Panc1 (cell line): ENCODE measurements at regions of chr16 and their contacts with region 1.

Region 1: DNA sequence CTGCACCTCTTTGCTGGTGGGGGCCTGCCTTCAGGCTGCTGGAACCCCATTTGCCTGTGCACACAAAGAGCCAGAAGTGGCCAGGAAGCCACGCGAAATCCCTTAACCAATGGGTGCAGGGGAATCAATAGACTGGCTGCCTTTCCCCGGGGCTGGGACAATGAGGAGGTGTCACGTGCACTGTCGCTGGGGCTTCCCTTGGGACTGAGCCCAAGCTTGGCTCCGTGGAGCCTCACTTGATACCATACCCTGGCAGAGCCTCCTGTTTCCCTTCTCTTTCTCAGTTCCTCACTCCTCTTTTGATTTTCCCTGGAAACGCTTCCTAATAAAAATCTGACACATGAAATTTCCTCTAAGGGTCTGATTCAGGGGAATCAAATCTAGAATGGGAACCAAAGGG is 38.8 kb upstream of the C16orf82 start:
- DNase-seq: no peak
- ATAC-seq: no peak
- H3K4me3 ChIP-seq: no peak overlapping the region
- H3K27ac ChIP-seq: no peak overlapping the region
- H3K4me1 ChIP-seq: no peaks in the 10 kb centered on the region
- H3K27me3 ChIP-seq: peaks cover 4% of the 10 kb centered on the region; the same call in 1 of the 2 replicates
- CTCF ChIP-seq: no peak

Region 2: GRCh38 chr16:27046958-27047518 is 19.1 kb after region 1 on chr16:
- CTCF ChIA-PET with region 1: no interaction called
- POLR2A ChIA-PET with region 1: no interaction called
- in situ Hi-C with region 1: no loop called
- intact Hi-C with region 1: loop called (anchors 1 kb)
- DNase-seq: no peak
- ATAC-seq: no peak
- H3K4me3 ChIP-seq: no peak overlapping the region
- H3K27ac ChIP-seq: no peak overlapping the region
- H3K4me1 ChIP-seq: no peaks in the 10 kb centered on the region
- H3K27me3 ChIP-seq: peaks cover 6% of the 10 kb centered on the region
- CTCF ChIP-seq: no peak

Region 3: GRCh38 chr16:27080870-27081269 is 52.9 kb after region 1 on chr16:
- CTCF ChIA-PET with region 1: interaction called, 14 read pairs
- POLR2A ChIA-PET with region 1: no interaction called
- in situ Hi-C with region 1: no loop called
- intact Hi-C with region 1: no loop called
- DNase-seq: no peak
- ATAC-seq: peak; percentile 73
- H3K4me3 ChIP-seq: no peak overlapping the region
- H3K27ac ChIP-seq: no peak overlapping the region
- H3K4me1 ChIP-seq: no peaks in the 10 kb centered on the region
- H3K27me3 ChIP-seq: peaks cover 5% of the 10 kb centered on the region
- CTCF ChIP-seq: peak; percentile 68